PC-9 (cell line): ENCODE measurements at regions of chr20 and their contacts with region 1.

Region 1: DNA sequence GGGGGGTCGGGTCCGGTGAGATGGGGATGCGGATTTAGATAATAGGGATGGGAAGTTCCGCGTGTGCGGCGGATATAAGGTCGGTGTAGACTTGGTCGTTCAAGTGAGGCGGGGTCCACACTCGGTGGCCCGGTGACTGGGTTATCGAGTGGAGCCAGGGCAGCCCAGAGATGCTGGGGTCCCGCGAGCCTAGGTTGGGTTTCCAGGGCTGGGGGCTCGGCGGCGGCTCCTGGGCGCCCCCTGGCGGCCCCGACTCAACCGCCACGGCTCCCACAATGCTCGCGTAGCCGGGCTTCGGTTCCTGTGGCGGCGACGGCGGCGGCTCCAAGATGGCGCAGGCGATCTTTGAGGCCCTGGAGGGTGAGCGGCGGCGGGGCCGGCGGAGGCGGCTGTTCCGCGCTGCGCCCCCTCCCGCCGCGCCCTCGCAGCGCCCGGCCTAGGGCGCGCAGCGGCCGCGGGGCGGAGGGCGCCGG is at the start of gene ZNF341:
- DNase-seq: peak in 1 of 2 experiments; percentile 69
- H3K4me3 ChIP-seq: peak within 1 kb of the TSS; percentile 64
- H3K27ac ChIP-seq: peak within 1 kb of the TSS; percentile 94
- H3K4me1 ChIP-seq: peaks cover 59% of the 10 kb centered on the region
- H3K27me3 ChIP-seq: no peaks in the 10 kb centered on the region
- CTCF ChIP-seq: peak; percentile 83
- total RNA-seq, gene ZNF341: 5.2 and 5.6 TPM in 2 replicates

Region 2: GRCh38 chr20:33459599-33459998 is 272.1 kb before region 1 on chr20:
- CTCF ChIA-PET with region 1: no interaction called
- POLR2A ChIA-PET with region 1: no interaction called
- intact Hi-C with region 1: loop called (anchors 5 kb)
- DNase-seq: no peak
- H3K4me3 ChIP-seq: no peak overlapping the region
- H3K27ac ChIP-seq: no peak overlapping the region
- H3K4me1 ChIP-seq: peaks cover 6% of the 10 kb centered on the region; the same call in 1 of the 2 replicates
- H3K27me3 ChIP-seq: no peaks in the 10 kb centered on the region
- CTCF ChIP-seq: no peak

Region 3: DNA sequence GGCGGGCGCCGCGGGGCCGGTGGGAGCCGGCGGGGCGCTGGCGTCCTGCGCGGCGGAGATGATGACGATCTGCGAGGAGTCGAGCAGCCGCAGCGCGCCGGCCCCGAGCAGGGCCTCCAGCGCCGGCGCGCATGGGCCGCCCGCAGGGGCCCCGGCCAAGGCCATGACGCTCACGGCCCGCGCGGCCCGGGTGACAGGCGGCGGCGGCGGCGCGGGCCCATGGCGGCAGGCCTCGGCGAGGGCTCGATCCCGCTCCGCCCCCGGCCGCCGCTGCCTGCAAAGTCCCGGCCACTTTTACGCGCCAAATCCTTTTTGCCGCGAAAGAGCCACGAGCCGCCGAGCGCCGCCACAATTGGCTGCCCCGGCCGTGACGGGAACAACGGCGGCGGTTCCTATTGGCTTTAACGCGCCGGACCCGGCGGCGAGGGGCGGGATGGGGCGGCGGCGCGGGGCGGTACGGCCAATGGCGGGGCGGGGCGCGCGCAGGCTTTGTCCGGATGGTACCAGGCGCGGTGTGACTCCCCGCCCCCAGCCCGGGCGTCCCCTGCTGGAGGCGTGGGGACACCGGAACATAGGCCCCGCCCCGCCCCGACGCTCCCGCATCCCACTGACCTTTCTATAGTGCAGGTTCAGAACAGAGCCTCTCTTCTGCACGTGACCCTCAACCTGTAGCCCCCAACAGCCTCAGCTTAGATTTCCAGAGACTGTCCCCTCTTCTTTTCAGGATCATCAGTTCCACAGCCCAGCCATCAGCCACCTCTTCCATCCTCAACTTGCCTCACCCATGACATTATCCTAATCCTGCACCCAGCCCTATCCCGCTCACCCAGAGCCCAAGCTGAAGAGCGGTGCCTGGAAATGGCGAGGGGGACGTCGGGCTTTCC is 45.4 kb before region 1 on chr20 and contains the start of gene E2F1:
- CTCF ChIA-PET with region 1: no interaction called
- POLR2A ChIA-PET with region 1: no interaction called
- intact Hi-C with region 1: loop called (anchors 1 kb)
- DNase-seq: peak; percentile 82 to 99
- H3K4me3 ChIP-seq: peak within 1 kb of the TSS; percentile 73
- H3K27ac ChIP-seq: no peak within 1 kb of the TSS
- H3K4me1 ChIP-seq: peaks cover 33% of the 10 kb centered on the region
- H3K27me3 ChIP-seq: no peaks in the 10 kb centered on the region
- CTCF ChIP-seq: 0 out of 2 replicates have a peak, but pooled peaks have one; percentile 25
- total RNA-seq, gene E2F1: 31.5 and 31.6 TPM in 2 replicates

Region 4: GRCh38 chr20:33810885-33811777 is 79.4 kb after region 1 on chr20 and contains the start of gene CHMP4B:
- CTCF ChIA-PET with region 1: no interaction called
- POLR2A ChIA-PET with region 1: interaction called, 6 read pairs
- intact Hi-C with region 1: loop called (anchors 1 kb)
- DNase-seq: peak; percentile 93 to 99
- H3K4me3 ChIP-seq: peak within 1 kb of the TSS; percentile 84
- H3K27ac ChIP-seq: peak within 1 kb of the TSS; percentile 94
- H3K4me1 ChIP-seq: peaks cover 35% of the 10 kb centered on the region
- H3K27me3 ChIP-seq: no peaks in the 10 kb centered on the region
- CTCF ChIP-seq: no peak
- total RNA-seq, gene CHMP4B: 176 and 180 TPM in 2 replicates

Region 5: DNA sequence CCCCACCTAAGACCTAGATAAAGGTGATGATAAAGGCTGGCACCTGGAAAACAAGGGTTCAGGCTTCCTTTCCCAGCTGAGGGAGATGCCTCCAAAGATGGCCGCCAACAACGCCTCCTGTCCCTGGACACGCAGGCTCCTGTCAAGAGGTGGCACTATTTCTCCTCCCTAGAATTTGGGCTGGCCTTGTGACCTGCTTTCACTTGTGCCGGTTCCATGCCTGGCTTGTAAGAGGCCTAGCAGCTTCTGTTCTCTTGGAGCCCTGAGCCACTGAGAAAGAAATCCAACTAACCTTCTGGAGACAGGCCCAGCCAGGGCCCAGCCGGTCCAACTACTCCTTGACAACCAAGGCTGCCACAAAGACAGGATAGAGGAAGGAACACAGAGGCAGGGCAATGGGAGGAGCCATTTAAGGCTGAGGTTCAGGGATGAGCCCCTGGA is 201.8 kb after region 1 on chr20:
- CTCF ChIA-PET with region 1: no interaction called
- POLR2A ChIA-PET with region 1: no interaction called
- intact Hi-C with region 1: no loop called
- DNase-seq: peak in 1 of 2 experiments; percentile 15
- H3K4me3 ChIP-seq: no peak overlapping the region
- H3K27ac ChIP-seq: no peak overlapping the region
- H3K4me1 ChIP-seq: no peaks in the 10 kb centered on the region
- H3K27me3 ChIP-seq: no peaks in the 10 kb centered on the region
- CTCF ChIP-seq: peak; percentile 39; the same call in 1 of the 2 replicates

Region 6: DNA sequence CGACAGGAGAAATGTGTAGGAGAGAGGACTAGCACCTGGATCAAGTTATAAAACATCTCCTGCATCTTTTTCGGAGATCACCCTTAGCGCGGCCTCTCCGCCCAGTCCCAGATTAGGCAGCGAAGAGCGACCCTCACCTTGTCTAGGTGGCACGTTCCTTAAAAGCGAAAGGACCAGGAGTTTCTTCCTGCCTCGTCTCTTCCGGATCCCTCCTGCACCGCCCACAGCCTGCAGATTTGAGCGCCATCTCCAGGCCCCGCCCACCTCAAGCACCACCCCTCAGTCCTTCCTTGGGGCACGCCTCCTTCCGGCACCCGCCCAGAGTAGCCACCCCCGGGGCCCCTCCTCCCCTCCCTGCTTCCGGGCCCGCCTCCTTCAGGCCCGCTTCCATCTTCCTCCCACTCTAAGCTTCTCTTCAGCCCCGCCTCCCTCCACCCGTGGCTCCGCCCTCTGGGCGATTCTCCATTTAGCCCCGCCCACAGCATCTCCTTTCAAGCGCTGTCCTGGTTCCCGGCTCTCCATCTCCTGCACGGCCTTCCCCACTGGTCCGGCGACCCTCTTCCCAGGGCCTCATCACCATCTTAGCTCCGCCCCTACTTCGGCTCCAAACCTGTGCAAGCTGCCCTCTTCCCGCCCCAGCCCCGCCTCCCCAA is 261.3 kb after region 1 on chr20:
- CTCF ChIA-PET with region 1: no interaction called
- POLR2A ChIA-PET with region 1: interaction called, 5 read pairs
- intact Hi-C with region 1: loop called (anchors 1 kb)
- DNase-seq: peak; percentile 93 to 100
- H3K4me3 ChIP-seq: peak overlapping the region; percentile 92
- H3K27ac ChIP-seq: peak overlapping the region; percentile 86
- H3K4me1 ChIP-seq: peaks cover 28% of the 10 kb centered on the region
- H3K27me3 ChIP-seq: no peaks in the 10 kb centered on the region
- CTCF ChIP-seq: no peak